Transverse colon (tissue), 4 donors: ENCODE measurements at regions of chr5 and their contacts with region 1.

Region 1: DNA sequence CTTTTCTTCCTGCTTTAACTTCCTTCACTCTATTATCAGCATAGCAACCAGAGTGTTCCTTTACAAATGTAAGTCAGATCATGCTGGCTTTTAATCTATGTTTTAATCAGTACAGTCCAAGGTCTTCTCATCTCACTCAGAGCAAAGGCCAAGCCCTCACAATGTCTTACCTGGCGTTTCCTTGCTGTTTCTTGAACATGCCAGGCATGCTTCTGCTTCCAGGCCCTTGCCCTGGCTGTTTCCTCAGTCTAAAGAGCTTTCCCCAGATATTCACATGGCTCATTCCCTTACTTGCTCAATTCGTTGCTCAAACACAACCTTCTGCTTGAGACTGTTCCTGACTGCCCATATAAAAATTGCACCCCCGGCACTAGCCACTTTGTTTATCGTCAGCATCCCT is 121.7 kb upstream of the GLRA1 start:
- DNase-seq: no peak
- H3K4me3 ChIP-seq: no peak overlapping the region
- H3K27ac ChIP-seq: no peak overlapping the region
- H3K4me1 ChIP-seq: no peaks in the 10 kb centered on the region
- H3K27me3 ChIP-seq: no peaks in the 10 kb centered on the region
- CTCF ChIP-seq: no peak
- EP300 ChIP-seq: no peak
- POLR2A ChIP-seq: no peak

Region 2: GRCh38 chr5:152205804-152206203 is 159.4 kb after region 1 on chr5:
- in situ Hi-C with region 1: no loop called
- intact Hi-C with region 1: no loop called
- DNase-seq: no peak
- H3K4me3 ChIP-seq: no peak overlapping the region
- H3K27ac ChIP-seq: no peak overlapping the region
- H3K4me1 ChIP-seq: no peaks in the 10 kb centered on the region
- H3K27me3 ChIP-seq: no peaks in the 10 kb centered on the region
- CTCF ChIP-seq: no peak
- EP300 ChIP-seq: no peak
- POLR2A ChIP-seq: no peak

Region 3: DNA sequence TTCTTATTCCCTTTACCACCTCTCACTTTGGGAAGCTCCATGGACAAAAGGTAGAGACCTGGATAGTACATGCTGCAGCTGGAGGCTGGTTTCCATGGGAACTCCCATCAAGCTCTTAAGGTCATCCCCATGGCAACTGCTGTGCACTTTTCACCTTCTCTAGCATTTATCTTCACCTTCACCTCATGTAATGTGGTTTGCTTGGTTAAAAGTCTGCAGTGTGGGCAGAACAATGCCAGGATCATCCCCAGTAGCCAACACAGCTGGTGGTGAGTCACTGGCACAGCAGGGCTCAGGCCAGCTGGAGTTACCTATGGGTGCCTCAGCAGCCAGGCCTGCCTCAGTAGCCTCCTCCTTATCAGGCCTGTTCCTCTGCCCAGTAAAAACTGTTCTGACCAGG is 1654.6 kb after region 1 on chr5:
- in situ Hi-C with region 1: no loop called
- intact Hi-C with region 1: loop called (anchors 5 kb)
- DNase-seq: no peak
- H3K4me3 ChIP-seq: no peak overlapping the region
- H3K27ac ChIP-seq: no peak overlapping the region
- H3K4me1 ChIP-seq: no peaks in the 10 kb centered on the region
- H3K27me3 ChIP-seq: no peaks in the 10 kb centered on the region
- CTCF ChIP-seq: no peak
- EP300 ChIP-seq: no peak
- POLR2A ChIP-seq: no peak